ENCODE measurements at regions of chr10 and their contacts with region 1.

Region 1: GRCh38 chr10:93352638-93353383 is 129.3 kb downstream of the MYOF start:
- DNase-seq: no peak
- ATAC-seq: no peak
- H3K4me3 ChIP-seq: no peak overlapping the region
- H3K27ac ChIP-seq: no peak overlapping the region
- H3K4me1 ChIP-seq: no peaks in the 10 kb centered on the region
- H3K27me3 ChIP-seq: no peaks in the 10 kb centered on the region
- CTCF ChIP-seq: peak; percentile 62 to 80 (median 73)
- POLR2A ChIP-seq: no peak

Region 2: DNA sequence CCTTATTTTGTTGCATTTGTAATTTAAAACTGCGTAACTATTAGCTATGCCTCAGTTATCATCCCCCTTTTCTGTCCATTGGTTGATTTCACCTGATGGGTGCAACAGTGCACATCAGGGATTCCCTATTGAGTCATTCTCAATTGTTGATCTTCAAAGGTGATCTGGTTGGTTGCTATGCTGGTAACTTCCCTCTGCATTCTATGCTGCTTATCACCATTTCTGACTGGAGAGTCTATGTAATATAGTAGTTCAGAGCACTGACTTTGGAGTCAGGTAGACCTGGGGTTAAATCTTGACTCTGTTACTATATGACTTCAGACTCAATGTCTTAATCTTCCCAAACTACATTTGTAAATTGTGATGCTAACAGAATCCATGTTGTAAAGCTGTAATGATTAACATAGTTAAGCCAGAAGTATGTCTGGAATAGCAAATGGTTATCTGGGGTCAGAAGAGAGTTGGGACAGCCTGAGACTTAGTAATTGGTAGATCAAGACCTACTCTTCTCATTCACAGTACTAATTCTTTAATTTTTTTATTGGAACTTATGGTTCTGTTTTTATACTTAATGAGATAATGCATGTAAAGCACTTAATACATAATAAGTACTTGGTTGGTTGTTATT is 466.4 kb before region 1 on chr10:
- intact Hi-C with region 1: loop called in 6 of 10 experiments (anchors 5 to 10 kb)
- DNase-seq: no peak
- ATAC-seq: no peak
- H3K4me3 ChIP-seq: no peak overlapping the region
- H3K27ac ChIP-seq: no peak overlapping the region
- H3K4me1 ChIP-seq: peaks cover 0 to 12% (median 5%) of the 10 kb centered on the region in 12 donors
- H3K27me3 ChIP-seq: no peaks in the 10 kb centered on the region
- CTCF ChIP-seq: no peak
- POLR2A ChIP-seq: no peak

Region 3: DNA sequence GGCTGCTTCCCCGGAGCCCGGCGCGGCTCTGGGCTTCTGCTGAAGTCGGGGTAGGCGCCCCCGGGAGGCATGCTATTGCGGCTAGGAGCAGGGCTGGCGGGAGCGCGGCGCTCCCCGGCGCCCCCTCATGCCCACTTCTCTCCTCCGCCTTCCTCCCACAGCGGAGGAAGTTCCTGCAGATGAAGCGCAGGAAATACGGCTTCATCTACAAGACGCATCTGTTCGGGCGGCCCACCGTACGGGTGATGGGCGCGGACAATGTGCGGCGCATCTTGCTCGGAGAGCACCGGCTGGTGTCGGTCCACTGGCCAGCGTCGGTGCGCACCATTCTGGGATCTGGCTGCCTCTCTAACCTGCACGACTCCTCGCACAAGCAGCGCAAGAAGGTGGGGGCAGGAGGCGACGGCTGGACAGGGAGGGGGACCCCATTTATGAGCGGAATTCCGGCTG is 278.6 kb before region 1 on chr10:
- intact Hi-C with region 1: loop called in 1 of 10 experiments (anchors 10 kb)
- DNase-seq: no peak
- ATAC-seq: peak in 1 of 4 donors; percentile 7
- H3K4me3 ChIP-seq: peak overlapping the region; percentile 23 to 49 (median 39)
- H3K27ac ChIP-seq: no peak overlapping the region
- H3K4me1 ChIP-seq: peaks cover 5 to 38% (median 25%) of the 10 kb centered on the region in 12 donors
- H3K27me3 ChIP-seq: peaks cover 23 to 94% (median 65%) of the 10 kb centered on the region in 9 donors
- CTCF ChIP-seq: peak in 1 of 12 donors; percentile 15
- POLR2A ChIP-seq: no peak

Region 4: GRCh38 chr10:93080350-93081046 is 272.3 kb before region 1 on chr10:
- intact Hi-C with region 1: loop called in 7 of 10 experiments (anchors 2 to 10 kb)
- DNase-seq: peak in 2 of 5 donors; percentile 49 to 54
- ATAC-seq: peak in 3 of 4 donors; percentile 58 to 70 (median 69)
- H3K4me3 ChIP-seq: no peak overlapping the region
- H3K27ac ChIP-seq: no peak overlapping the region
- H3K4me1 ChIP-seq: peaks cover 0 to 7% (median 0%) of the 10 kb centered on the region in 12 donors
- H3K27me3 ChIP-seq: peaks cover 0 to 54% (median 25%) of the 10 kb centered on the region in 9 donors
- CTCF ChIP-seq: peak; percentile 72 to 85 (median 79)
- POLR2A ChIP-seq: no peak

Region 5: DNA sequence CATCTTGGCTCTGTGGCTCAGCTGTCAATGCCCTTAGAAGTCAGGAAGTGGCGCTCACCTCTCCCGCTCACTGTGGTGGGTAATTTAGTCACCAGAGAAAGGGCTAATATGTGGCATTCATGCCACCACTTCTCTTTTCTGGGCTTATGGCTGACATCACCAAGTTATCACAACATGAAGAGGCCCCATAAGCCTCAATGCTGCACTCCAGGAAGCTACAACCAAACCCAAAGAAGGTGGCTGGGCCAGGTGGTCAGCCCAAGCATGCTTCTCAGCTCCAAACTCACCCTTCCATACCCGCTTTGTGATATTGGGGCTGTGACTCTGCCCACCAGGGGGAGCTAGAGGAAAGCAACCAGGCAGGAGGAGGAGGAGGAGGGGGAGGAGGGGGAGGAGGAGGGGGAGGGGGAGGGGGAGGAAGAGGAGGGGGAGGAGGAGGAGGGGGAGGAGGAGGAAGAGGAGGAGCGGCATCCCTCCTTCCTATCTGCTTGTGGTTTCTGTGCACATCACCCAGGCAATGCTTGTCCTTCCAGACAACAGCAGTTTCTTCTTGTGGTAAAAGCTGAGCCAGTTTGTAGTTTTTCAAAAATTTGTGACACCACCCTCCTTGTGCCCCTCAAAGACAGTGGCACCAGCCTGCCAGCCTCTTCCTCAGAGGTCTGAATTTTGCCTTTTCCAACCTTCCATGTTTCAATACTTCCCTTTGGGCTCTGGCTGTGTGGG is 237.0 kb before region 1 on chr10:
- intact Hi-C with region 1: loop called in 2 of 10 experiments (anchors 10 kb)
- DNase-seq: peak; percentile 49 to 69 (median 55)
- ATAC-seq: peak in 3 of 4 donors; percentile 44 to 66 (median 62)
- H3K4me3 ChIP-seq: no peak overlapping the region
- H3K27ac ChIP-seq: no peak overlapping the region
- H3K4me1 ChIP-seq: no peaks in the 10 kb centered on the region
- H3K27me3 ChIP-seq: peaks cover 0 to 11% (median 0%) of the 10 kb centered on the region in 9 donors
- CTCF ChIP-seq: peak in 11 of 12 donors; percentile 12 to 49 (median 32)
- POLR2A ChIP-seq: no peak

Region 6: DNA sequence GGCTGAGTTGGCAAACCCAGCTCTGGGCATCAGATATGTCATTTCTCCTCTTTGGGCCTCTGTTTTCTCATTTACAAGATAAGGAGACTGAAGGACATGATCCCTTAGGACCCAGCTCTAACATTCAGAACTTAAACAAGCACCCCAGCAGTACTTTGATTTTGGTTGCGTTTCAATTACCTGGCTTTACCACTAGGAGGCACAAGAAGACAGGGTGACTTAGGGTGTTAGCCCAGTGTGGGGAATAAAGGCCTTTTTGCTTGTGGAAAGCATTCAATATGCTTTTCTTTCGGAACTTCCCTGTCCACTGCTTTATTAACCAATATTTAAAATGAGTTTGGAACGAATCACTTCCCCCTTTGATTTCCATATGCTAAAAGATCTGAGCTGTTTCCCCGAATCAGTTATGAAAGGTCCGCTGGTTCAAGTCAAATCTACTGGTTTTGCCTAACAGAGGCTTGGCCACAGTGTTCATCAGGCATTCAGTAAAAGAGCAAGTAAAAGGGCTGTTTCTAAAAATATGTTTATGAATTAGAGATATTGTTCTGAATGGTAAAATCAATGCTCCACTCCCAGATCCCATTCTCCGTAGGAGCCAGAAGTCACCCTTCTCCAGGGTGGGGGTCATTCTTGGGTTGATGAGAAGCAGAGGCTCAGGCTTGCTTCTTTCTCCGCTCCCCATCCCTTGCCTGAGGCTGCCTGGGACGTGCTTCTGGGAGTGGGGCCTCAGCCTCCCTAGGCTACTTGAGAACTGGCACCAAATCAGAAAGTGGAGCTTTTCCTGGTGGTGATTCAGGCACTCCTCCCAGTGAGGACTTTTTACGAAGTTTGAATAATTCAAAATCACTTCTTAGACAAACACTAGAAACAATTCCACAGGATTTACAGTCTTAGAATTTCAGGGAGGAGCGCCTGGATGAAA is 23.8 kb after region 1 on chr10:
- intact Hi-C with region 1: no loop called
- DNase-seq: peak in 4 of 5 donors; percentile 37 to 64 (median 45)
- ATAC-seq: peak; percentile 78 to 93 (median 88)
- H3K4me3 ChIP-seq: peak overlapping the region in 3 of 12 donors; percentile 3 to 24 (median 10)
- H3K27ac ChIP-seq: peak overlapping the region in 10 of 12 donors; percentile 43 to 83 (median 72)
- H3K4me1 ChIP-seq: peaks cover 0 to 36% (median 11%) of the 10 kb centered on the region in 12 donors
- H3K27me3 ChIP-seq: no peaks in the 10 kb centered on the region
- CTCF ChIP-seq: peak; percentile 86 to 97 (median 94)
- POLR2A ChIP-seq: no peak

Region 7: DNA sequence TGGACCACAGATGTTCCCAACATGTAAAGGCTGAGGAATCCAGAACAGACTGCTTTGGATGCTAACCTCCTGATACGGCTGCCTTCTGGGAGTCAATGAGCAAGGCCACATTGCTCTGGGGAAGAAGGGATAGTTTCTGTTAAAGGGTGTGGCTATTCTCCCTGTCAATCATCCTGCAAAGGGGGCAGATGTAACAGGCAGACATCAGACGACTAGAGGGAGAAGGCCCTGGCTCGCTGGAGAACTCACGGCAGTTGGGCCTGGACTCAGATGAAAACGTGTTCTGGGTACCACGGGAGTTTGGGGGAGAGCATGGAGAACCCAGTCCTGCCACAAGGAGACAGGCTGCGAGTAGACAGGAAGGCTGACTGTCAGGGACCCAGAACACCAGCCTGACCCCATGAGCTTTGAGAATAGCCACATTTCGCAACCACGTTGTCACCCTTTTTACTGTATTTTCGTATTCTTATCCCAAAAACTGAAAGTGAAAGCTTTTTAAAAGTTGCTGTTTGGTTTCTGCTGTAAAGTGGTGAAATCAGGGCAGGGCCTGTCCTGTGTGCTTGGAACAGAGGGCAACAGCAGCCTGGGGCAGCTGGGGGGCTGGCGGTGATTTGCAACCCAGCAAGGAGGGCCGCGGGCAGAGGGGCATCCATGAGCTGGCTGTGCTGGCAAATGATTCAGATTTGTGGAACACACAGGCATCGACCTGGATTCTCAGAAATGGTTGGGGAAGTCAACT is 34.0 kb after region 1 on chr10:
- intact Hi-C with region 1: no loop called
- DNase-seq: peak in 3 of 5 donors; percentile 18 to 34 (median 21)
- ATAC-seq: peak in 3 of 4 donors; percentile 34 to 44 (median 44)
- H3K4me3 ChIP-seq: peak overlapping the region in 4 of 12 donors; percentile 4 to 22 (median 12)
- H3K27ac ChIP-seq: peak overlapping the region; percentile 18 to 86 (median 62)
- H3K4me1 ChIP-seq: peaks cover 0 to 68% (median 11%) of the 10 kb centered on the region in 12 donors
- H3K27me3 ChIP-seq: no peaks in the 10 kb centered on the region
- CTCF ChIP-seq: peak in 1 of 12 donors; percentile 17
- POLR2A ChIP-seq: no peak

Region 8: DNA sequence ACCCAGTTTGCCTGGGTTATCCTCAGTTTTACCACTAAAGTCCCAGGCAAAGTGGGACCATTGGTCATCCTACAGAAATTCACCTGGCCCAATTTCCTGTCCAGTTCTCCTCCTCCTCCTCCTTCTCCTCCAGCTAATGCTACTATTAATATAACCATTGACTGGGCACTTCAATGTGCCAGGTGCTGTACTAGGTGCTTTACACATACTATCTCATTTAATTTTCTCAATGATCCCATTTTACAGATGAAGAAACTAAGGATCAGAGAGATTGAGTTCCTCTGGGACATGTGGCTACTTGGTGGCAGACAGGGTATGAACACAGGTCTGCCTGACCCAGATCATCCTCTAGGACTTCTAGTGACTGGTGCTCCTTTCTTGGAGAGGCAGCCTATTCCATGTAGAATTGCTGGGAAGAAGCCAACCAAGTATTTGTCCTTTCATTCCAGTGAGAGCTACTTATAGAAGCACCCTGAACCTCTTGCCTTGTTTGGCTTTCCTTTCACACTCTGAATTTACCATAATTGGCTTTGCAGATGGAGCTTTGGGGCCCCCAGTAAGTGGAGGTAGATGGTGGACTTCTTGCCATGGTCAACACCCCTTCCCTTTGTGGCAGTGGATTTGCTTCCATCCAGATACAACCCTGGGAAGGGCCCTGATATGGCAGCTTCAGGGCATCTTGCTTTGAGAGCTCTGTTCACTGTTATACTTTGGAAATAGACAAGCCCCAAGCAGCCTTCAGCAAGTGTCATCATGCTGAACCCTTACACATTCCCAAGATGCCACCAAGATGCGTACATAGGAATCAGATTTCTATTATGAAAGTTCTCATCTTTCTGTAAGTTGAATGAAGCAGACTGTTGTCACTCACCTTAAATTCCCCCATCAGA is 50.6 kb after region 1 on chr10:
- intact Hi-C with region 1: no loop called
- DNase-seq: no peak
- ATAC-seq: peak in 1 of 4 donors; percentile 18
- H3K4me3 ChIP-seq: no peak overlapping the region
- H3K27ac ChIP-seq: peak overlapping the region in 3 of 12 donors; percentile 16 to 45 (median 38)
- H3K4me1 ChIP-seq: peaks cover 0 to 39% (median 4%) of the 10 kb centered on the region in 12 donors
- H3K27me3 ChIP-seq: no peaks in the 10 kb centered on the region
- CTCF ChIP-seq: no peak
- POLR2A ChIP-seq: no peak

Region 9: DNA sequence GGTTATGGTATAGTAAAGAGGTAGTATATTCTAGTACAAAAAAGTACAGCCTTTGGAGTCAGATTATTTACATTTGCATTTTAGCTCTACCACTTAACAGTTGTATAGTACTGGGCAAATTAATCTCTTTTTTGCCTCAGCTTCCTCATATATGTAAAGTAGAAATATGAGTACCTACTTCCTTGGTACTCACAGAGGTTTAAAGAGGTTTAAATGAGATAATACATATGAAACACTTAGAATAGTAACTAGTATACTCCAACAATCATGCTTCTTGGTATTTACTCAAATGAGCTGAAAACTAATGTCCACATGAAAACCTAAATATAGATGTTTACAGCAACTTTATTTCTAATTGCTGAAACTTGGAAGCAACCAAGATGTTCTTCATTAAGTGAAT is 334.9 kb after region 1 on chr10:
- intact Hi-C with region 1: no loop called
- DNase-seq: no peak
- ATAC-seq: no peak
- H3K4me3 ChIP-seq: no peak overlapping the region
- H3K27ac ChIP-seq: no peak overlapping the region
- H3K4me1 ChIP-seq: no peaks in the 10 kb centered on the region
- H3K27me3 ChIP-seq: no peaks in the 10 kb centered on the region
- CTCF ChIP-seq: no peak
- POLR2A ChIP-seq: no peak